ENCODE measurements at regions of chr12 and their contacts with region 1.

Region 1: DNA sequence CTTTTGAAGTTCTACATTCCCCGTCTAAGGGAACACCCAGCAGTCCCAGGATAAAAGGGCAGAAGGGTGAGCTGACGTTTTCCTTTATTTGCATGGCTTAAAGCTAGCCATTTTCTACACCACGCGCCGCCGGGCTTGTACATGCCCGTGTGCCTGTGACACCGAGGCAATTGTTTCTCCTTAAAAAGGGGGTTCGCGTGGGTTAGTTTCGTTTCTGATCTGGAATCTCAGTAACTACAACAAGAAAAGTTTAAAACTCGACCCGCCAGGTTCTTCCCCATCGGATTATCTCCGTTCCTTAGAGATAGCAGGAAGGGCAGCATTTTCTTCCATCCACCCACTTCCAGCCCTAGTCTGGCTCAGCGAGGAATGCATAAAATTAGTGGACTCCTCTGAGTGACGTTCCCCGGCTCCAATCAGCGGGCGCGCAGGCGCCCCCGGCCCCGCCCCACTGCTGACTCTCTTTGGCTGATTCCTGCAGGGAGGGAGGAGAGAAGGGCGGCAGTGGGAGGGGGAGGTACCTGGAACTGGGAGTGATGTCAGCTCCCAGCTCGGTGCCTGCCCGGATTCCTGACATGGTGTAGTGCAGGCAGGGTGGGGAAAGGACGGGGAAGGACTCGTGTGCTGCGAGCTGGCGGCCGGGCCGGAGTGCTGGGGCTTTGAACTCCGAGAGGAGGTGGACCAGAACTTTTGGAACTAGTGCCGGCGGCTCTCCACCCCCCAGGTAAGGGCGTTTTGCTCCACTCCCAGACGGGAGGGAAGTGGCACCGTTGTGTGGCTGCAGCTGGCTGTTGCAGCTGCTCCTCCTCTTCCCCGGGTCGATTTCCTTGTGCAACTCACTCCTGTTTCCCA is at the start of gene PPFIBP1:
- DNase-seq: peak; percentile 99
- ATAC-seq: peak; percentile 98
- total RNA-seq, gene PPFIBP1: 292 TPM

Region 2: DNA sequence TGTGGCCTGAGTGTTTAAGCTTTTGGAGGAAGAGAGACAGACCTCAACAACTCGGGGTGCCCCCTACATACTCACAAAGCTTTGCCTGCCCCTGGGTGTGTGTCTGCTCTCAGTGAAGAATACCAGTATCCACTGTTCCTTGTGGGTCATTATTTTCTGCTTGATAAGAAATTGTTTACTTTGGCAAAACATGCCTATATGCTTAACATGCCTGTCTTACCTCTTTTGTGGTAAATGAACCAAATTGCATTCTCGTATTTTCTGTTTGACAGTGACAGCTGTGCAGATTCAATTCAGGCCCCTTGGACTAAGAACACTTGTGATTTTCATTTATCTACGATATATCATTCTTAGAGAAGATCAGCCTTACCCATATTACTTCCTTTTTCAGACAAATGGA is 121.8 kb after region 1 on chr12:
- intact Hi-C with region 1: loop called (anchors 5 kb)
- DNase-seq: no peak
- ATAC-seq: no peak